ENCODE measurements at regions of chr6 and their contacts with region 1.

Region 1: DNA sequence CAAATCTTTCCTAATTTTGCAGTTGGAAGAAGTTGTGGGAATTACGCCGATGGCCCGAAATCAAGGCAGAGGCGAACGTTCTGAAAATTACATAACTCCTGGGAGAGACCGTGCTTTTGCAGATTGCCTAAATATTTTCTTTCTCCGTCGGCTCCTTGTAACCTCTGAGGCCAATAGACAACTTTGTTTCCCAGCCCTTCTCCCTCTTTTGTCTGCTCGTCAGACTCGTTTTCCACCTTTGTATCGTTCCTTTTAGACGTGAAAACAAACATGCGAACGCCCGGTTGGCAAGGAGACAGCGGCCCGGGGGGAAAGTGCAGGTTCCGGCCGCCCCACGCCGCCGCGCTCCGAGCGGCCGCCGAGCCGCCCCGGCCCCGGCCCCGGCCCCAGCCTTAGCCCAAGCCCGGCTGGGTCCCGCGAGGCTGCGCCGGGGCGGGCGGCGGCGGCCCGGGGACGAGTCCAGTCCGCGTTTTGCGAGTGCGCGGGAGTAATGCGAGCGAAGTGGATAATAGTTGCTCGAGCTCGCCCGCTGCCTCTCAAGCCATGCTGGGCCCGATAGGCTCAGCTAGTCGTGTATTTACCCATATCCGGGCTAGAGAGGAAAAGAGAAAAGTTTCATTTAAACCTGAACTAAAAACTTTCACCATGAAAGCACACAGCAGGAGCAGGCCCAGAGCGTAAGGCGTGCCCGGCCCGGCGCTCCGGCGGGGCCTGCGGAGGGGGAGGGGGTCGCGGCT is at the start of gene ARID1B:
- DNase-seq: peak; percentile 73 to 83
- H3K4me3 ChIP-seq: peak within 1 kb of the TSS; percentile 88
- H3K4me3 Mint-ChIP-seq: peak within 1 kb of the TSS; percentile 92
- H3K27ac Mint-ChIP-seq: peak within 1 kb of the TSS; percentile 90
- H3K4me1 ChIP-seq: peaks cover 16% of the 10 kb centered on the region
- H3K4me1 Mint-ChIP-seq: no peaks in the 10 kb centered on the region
- H3K27me3 ChIP-seq: no peaks in the 10 kb centered on the region
- H3K27me3 Mint-ChIP-seq: no peaks in the 10 kb centered on the region
- CTCF ChIP-seq: no peak
- total RNA-seq, gene ARID1B: 58.8 and 62.2 TPM in 2 replicates

Region 2: GRCh38 chr6:156686995-156687788 is 89.8 kb before region 1 on chr6:
- CTCF ChIA-PET with region 1: no interaction called
- POLR2A ChIA-PET with region 1: interaction called, 3 read pairs
- intact Hi-C with region 1: loop called (anchors 1 kb)
- DNase-seq: peak; percentile 67 to 84
- H3K4me3 ChIP-seq: peak overlapping the region; percentile 79
- H3K4me3 Mint-ChIP-seq: peak overlapping the region; percentile 75
- H3K27ac Mint-ChIP-seq: peak overlapping the region; percentile 33
- H3K4me1 ChIP-seq: no peaks in the 10 kb centered on the region; the same call in 1 of the 2 replicates
- H3K4me1 Mint-ChIP-seq: peaks cover 17% of the 10 kb centered on the region
- H3K27me3 ChIP-seq: no peaks in the 10 kb centered on the region; the same call in 1 of the 2 replicates
- H3K27me3 Mint-ChIP-seq: no peaks in the 10 kb centered on the region
- CTCF ChIP-seq: no peak

Region 3: GRCh38 chr6:156741287-156742073 is 35.5 kb before region 1 on chr6:
- CTCF ChIA-PET with region 1: no interaction called
- POLR2A ChIA-PET with region 1: no interaction called
- intact Hi-C with region 1: no loop called
- DNase-seq: no peak
- H3K4me3 ChIP-seq: no peak overlapping the region
- H3K4me3 Mint-ChIP-seq: no peak overlapping the region
- H3K27ac Mint-ChIP-seq: no peak overlapping the region
- H3K4me1 ChIP-seq: no peaks in the 10 kb centered on the region
- H3K4me1 Mint-ChIP-seq: no peaks in the 10 kb centered on the region
- H3K27me3 ChIP-seq: no peaks in the 10 kb centered on the region
- H3K27me3 Mint-ChIP-seq: no peaks in the 10 kb centered on the region
- CTCF ChIP-seq: no peak

Region 4: DNA sequence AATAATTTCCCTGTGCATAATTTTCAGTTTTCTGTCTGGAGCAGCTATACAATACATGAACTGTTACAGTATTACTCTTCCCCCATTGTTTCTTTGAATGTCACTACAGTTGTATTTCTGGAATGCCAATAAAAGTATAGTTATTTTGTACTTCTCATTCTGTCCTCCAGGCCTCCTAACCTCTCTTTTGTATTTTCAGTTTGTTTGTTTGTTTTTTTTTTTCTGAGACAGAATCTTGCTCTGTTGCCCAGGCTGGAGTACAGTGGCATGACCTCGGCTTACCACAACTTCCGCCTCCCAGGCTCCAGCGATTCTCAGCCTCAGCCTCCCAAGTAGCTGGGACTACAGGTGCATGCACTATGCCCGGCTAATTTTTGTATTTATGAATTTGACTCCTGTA is 16.6 kb before region 1 on chr6:
- CTCF ChIA-PET with region 1: no interaction called
- POLR2A ChIA-PET with region 1: no interaction called
- intact Hi-C with region 1: no loop called
- DNase-seq: no peak
- H3K4me3 ChIP-seq: no peak overlapping the region
- H3K4me3 Mint-ChIP-seq: no peak overlapping the region
- H3K27ac Mint-ChIP-seq: no peak overlapping the region
- H3K4me1 ChIP-seq: no peaks in the 10 kb centered on the region
- H3K4me1 Mint-ChIP-seq: no peaks in the 10 kb centered on the region
- H3K27me3 ChIP-seq: no peaks in the 10 kb centered on the region
- H3K27me3 Mint-ChIP-seq: no peaks in the 10 kb centered on the region
- CTCF ChIP-seq: no peak

Region 5: GRCh38 chr6:156883497-156884252 is 106.7 kb after region 1 on chr6:
- CTCF ChIA-PET with region 1: no interaction called
- POLR2A ChIA-PET with region 1: no interaction called
- intact Hi-C with region 1: loop called (anchors 5 kb)
- DNase-seq: peak in 1 of 2 experiments; percentile 8
- H3K4me3 ChIP-seq: no peak overlapping the region
- H3K4me3 Mint-ChIP-seq: no peak overlapping the region
- H3K27ac Mint-ChIP-seq: no peak overlapping the region
- H3K4me1 ChIP-seq: peaks cover 10% of the 10 kb centered on the region; the same call in 1 of the 2 replicates
- H3K4me1 Mint-ChIP-seq: peaks cover 20% of the 10 kb centered on the region
- H3K27me3 ChIP-seq: no peaks in the 10 kb centered on the region
- H3K27me3 Mint-ChIP-seq: no peaks in the 10 kb centered on the region
- CTCF ChIP-seq: no peak

Region 6: GRCh38 chr6:157021344-157021992 is 244.5 kb after region 1 on chr6:
- CTCF ChIA-PET with region 1: no interaction called
- POLR2A ChIA-PET with region 1: no interaction called
- intact Hi-C with region 1: loop called (anchors 1 kb)
- DNase-seq: peak; percentile 90
- H3K4me3 ChIP-seq: peak overlapping the region; percentile 74
- H3K4me3 Mint-ChIP-seq: peak overlapping the region; percentile 88
- H3K27ac Mint-ChIP-seq: peak overlapping the region; percentile 94
- H3K4me1 ChIP-seq: peaks cover 10% of the 10 kb centered on the region
- H3K4me1 Mint-ChIP-seq: peaks cover 16% of the 10 kb centered on the region
- H3K27me3 ChIP-seq: no peaks in the 10 kb centered on the region
- H3K27me3 Mint-ChIP-seq: no peaks in the 10 kb centered on the region
- CTCF ChIP-seq: peak; percentile 33 to 41

Measured in Caco-2 (cell line).